ENCODE measurements at regions of chr10 and their contacts with region 1.

Region 1: DNA sequence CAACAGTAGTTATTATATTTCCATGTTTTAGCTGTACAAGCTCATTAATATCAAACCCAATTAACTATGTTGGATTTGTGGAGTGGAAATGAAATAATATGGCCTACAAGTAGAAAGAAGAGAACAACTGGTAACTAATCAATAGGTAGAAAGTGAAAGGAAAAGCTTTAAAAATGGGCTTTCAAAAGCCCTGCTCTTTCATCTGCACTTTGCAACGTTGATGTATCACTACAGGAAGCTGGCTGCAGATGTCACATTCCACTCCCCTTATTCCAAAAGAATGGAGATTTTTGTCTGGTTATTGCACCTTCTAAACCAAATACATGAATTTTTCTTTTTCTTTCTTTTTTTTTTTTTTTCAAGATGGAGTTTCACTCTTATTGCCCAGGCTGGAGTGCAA is 11.7 kb upstream of the MKI67 start:
- DNase-seq: no peak
- H3K4me3 ChIP-seq: no peak overlapping the region
- H3K27ac ChIP-seq: no peak overlapping the region
- H3K4me1 ChIP-seq: no peaks in the 10 kb centered on the region
- H3K27me3 ChIP-seq: no peaks in the 10 kb centered on the region
- CTCF ChIP-seq: no peak
- EP300 ChIP-seq: no peak
- POLR2A ChIP-seq: no peak
- RAD21 ChIP-seq: no peak

Region 2: DNA sequence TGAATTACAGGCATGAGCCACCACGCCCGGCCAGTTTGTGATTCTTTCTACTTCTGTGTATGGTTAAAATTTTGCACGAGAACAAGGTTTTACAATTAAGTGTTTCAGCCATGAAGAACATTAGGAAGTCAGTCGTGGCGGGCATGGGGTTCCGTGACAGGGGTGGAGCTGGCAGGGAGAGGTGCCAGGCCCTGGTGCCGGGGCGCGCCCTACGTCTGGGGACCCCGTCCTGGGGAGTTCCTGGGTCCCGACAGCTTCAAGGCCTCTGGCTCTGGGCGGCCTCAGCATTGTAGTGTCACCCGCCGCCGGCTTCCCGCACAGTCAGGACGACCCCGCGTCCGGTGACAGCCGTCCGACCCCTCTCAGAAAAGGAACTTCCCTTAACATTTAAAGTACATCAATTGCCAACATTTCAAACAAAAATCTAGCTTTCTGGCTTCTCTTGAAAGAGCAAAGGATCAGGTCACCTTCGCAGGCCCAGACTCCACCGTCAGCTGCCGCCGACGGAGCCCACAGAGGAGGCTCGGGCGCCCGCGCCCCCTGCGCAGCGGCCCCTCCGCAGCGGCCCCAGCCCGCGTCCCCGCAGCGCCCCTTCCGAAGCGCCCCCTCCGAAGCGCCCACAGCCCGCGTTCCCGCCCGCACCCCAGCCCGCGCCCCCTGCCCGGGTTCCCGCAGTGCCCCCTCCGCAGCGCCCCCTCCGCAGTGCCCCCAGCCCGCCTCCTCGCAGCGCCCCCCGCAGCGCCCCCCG is 11.6 kb after region 1 on chr10:
- CTCF ChIA-PET with region 1: interaction called, 13 read pairs
- POLR2A ChIA-PET with region 1: no interaction called
- DNase-seq: no peak
- H3K4me3 ChIP-seq: peak overlapping the region in 3 of 4 experiments; percentile 8 to 71 (median 11); a peak in 5 of 8 replicates
- H3K27ac ChIP-seq: no peak overlapping the region
- H3K4me1 ChIP-seq: peaks cover 0 to 4% (median under 1%) of the 10 kb centered on the region in 4 experiments; a peak in 3 of 7 replicates
- H3K27me3 ChIP-seq: peaks cover 0 to 8% (median 2%) of the 10 kb centered on the region in 4 experiments; a peak in 3 of 7 replicates
- CTCF ChIP-seq: no peak
- EP300 ChIP-seq: no peak
- POLR2A ChIP-seq: no peak
- RAD21 ChIP-seq: no peak

Measured in H1 (cell line).